IMR-90 (cell line): ENCODE measurements at regions of chr10 and their contacts with region 1.

Region 1: DNA sequence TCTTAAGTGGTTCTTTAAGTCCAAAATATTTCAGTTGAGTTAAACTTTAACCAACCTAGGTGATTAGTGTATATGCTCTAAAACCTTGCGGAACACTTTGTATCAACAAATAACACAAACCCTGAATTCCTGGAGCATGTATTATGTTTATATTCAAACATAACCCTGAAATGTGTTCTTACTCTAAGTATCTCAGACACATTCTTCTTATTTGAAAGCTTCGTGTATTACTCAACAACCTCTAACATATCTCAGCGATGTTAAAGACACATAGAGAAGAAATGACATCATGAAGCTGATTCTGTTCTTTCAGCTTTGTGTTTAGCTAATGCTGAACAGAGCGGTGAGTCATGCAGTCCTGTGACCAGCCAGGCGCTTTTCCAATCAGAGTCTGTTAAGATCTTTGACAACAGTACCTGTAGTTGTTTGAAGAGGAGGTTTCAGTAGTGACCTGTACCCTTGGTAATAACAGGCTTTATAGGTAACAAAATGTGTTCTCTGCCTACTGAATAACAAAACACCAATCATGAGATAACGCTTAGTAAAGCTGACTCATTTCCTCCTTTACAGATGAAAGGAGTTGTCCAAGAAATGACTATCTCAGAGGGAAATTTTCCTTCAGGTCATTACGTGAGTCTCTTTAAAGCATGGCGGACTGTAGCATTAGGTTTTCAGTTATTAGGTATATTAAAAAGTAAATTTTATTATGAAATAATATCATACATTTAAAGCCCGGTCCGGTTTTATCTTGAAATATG is 67.3 kb upstream of the KLF6 start:
- DNase-seq: peak; percentile 99
- ATAC-seq: peak; percentile 88
- H3K4me3 ChIP-seq: no peak overlapping the region
- H3K27ac ChIP-seq: peak overlapping the region; percentile 85
- H3K4me1 ChIP-seq: peaks cover 19% of the 10 kb centered on the region
- H3K27me3 ChIP-seq: no peaks in the 10 kb centered on the region
- CTCF ChIP-seq: no peak
- POLR2A ChIP-seq: peak; percentile 12
- RAD21 ChIP-seq: no peak; the same call in 1 of the 2 replicates

Region 2: GRCh38 chr10:3566627-3567026 is 285.7 kb before region 1 on chr10:
- CTCF ChIA-PET with region 1: no interaction called
- POLR2A ChIA-PET with region 1: no interaction called
- dilution Hi-C with region 1: no loop called
- in situ Hi-C with region 1: no loop called
- intact Hi-C with region 1: no loop called
- DNase-seq: no peak
- ATAC-seq: no peak
- H3K4me3 ChIP-seq: no peak overlapping the region
- H3K27ac ChIP-seq: no peak overlapping the region
- H3K4me1 ChIP-seq: peaks cover 5% of the 10 kb centered on the region
- H3K27me3 ChIP-seq: no peaks in the 10 kb centered on the region
- CTCF ChIP-seq: no peak
- POLR2A ChIP-seq: no peak
- RAD21 ChIP-seq: no peak

Region 3: GRCh38 chr10:3811291-3811870 is 40.9 kb before region 1 on chr10:
- CTCF ChIA-PET with region 1: no interaction called
- POLR2A ChIA-PET with region 1: interaction called, 3 read pairs
- dilution Hi-C with region 1: no loop called
- in situ Hi-C with region 1: no loop called
- intact Hi-C with region 1: loop called (anchors 2 kb)
- DNase-seq: peak; percentile 71
- ATAC-seq: peak; percentile 63
- H3K4me3 ChIP-seq: peak overlapping the region; percentile 17; the same call in 1 of the 2 replicates
- H3K27ac ChIP-seq: peak overlapping the region; percentile 91
- H3K4me1 ChIP-seq: peaks cover 33% of the 10 kb centered on the region
- H3K27me3 ChIP-seq: no peaks in the 10 kb centered on the region
- CTCF ChIP-seq: no peak
- POLR2A ChIP-seq: no peak
- RAD21 ChIP-seq: no peak